Naive thymus-derived CD4-positive, alpha-beta T cell (primary cell): ENCODE measurements at regions of chr1 and their contacts with region 1.

Region 1: DNA sequence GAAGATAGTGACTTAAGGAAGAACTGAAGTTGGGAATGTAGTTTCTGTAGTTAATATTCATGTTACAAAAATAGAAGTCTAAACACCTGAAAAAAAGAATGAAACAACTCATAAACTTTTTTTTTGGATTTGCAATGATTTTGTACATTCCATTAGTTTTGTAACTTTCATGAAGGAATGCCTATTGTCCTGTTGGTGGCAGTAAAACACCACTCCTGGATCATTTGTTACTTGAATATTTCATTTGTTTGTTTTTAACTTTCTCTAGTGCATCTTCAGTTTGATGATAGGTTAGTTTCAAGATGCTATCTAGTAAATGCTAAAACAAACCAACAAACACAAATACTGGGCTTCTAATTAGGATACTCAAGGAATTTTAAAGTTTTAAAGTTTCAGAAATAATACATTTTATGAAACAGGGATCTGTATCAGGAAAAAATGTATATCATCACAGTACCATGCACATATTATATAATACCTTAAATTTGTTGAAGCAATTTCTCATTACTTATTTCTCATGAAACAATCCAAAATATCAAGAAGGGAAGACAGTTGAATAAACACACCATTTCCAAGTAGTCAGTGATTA is 229.7 kb upstream of the CACYBP start:
- DNase-seq: peak in 7 of 9 donors; percentile 19 to 58 (median 43)
- ATAC-seq: peak; percentile 68
- H3K4me3 ChIP-seq: no peak overlapping the region
- H3K4me3 Mint-ChIP-seq: no peak overlapping the region
- H3K27ac ChIP-seq: no peak overlapping the region
- H3K27ac Mint-ChIP-seq: peak overlapping the region in 1 of 9 donors; percentile 12
- H3K4me1 ChIP-seq: no peaks in the 10 kb centered on the region
- H3K4me1 Mint-ChIP-seq: peaks cover 0 to 18% (median 4%) of the 10 kb centered on the region in 7 donors
- H3K27me3 ChIP-seq: no peaks in the 10 kb centered on the region
- H3K27me3 Mint-ChIP-seq: no peaks in the 10 kb centered on the region

Region 2: DNA sequence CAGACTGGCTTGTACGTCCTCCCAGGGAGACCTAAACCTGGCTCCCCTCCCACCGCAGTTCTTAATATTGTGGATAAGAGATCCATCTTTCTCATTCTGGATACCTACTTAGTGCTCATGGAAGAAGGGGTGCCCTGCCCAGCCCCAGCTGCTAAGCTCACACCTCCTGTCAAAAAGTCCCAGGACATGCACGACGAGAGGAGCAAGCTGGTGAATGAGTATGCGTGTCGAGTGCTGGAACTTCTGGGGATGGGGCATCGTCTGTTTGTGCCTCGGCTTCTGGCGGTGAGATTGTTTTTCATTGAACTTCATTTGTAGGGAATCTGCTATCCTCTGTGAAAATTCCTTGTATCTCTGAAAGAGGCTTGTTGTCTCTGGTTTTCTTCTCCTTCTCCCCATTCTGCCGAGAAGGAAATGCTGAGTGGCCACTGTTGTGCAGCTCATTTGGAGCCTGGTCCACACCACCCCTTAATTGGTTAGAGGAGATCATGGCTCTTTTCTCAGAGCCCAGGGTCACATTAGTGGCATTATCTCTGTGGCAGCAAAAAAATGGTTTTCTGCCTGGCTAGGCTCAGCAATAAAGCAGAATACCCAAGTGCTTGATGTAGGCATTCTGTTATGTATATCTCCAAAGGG is 30.3 kb after region 1 on chr1:
- CTCF ChIA-PET with region 1: no interaction called
- POLR2A ChIA-PET with region 1: no interaction called
- intact Hi-C with region 1: loop called (anchors 1 to 2 kb)
- DNase-seq: peak in 4 of 9 donors; percentile 2 to 29 (median 16)
- ATAC-seq: peak; percentile 7
- H3K4me3 ChIP-seq: peak overlapping the region; percentile 73
- H3K4me3 Mint-ChIP-seq: no peak overlapping the region
- H3K27ac ChIP-seq: peak overlapping the region; percentile 81
- H3K27ac Mint-ChIP-seq: no peak overlapping the region
- H3K4me1 ChIP-seq: peaks cover 7 to 9% of the 10 kb centered on the region in 2 donors
- H3K4me1 Mint-ChIP-seq: peaks cover 0 to 18% (median 6%) of the 10 kb centered on the region in 7 donors
- H3K27me3 ChIP-seq: no peaks in the 10 kb centered on the region
- H3K27me3 Mint-ChIP-seq: no peaks in the 10 kb centered on the region

Region 3: DNA sequence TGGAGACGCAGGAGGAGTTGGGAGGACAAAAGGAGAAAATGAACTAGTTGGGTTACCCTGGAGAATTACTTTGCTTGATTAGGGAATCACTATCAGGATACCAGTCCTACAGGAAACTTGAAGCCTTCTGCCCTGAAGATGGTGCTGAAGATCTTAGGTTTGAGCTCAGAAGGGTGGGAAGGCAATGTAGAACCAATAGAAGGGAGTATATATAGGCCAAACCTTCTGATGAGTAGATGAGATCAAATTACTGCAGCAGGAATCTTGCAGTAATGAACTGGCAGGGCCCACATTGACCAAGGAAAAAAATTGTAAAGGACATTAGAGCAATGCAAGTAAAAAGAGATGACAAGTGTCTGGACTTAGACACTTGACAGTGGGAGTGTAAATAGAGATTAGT is 113.4 kb after region 1 on chr1:
- CTCF ChIA-PET with region 1: interaction called, 3 read pairs
- POLR2A ChIA-PET with region 1: no interaction called
- intact Hi-C with region 1: loop called in 1 of 2 experiments (anchors 10 kb)
- DNase-seq: peak in 3 of 9 donors; percentile 9 to 35 (median 27)
- ATAC-seq: peak; percentile 44
- H3K4me3 ChIP-seq: no peak overlapping the region
- H3K4me3 Mint-ChIP-seq: no peak overlapping the region
- H3K27ac ChIP-seq: no peak overlapping the region
- H3K27ac Mint-ChIP-seq: peak overlapping the region in 2 of 9 donors; percentile 22 to 46
- H3K4me1 ChIP-seq: no peaks in the 10 kb centered on the region
- H3K4me1 Mint-ChIP-seq: peaks cover 0 to 9% (median 4%) of the 10 kb centered on the region in 7 donors
- H3K27me3 ChIP-seq: no peaks in the 10 kb centered on the region
- H3K27me3 Mint-ChIP-seq: no peaks in the 10 kb centered on the region

Region 4: DNA sequence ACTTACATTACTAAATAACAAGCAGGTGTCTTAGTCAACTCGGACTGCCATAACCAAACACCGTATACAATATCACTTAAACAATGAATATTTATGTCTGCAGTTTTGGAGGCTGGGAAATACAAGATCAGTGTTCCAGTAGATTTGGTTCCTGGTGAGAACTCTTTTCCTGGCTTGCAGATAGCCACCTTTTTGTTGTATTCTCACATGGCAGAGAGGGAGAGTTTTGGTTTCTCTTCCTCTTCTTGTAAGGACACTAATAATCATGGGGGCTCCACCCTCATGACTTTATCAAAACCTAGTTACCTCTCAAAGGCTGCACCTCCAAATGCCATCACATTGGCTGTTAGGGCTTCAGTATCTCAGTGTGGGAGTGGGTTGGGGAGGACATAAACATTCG is 146.8 kb after region 1 on chr1:
- CTCF ChIA-PET with region 1: no interaction called
- POLR2A ChIA-PET with region 1: no interaction called
- intact Hi-C with region 1: no loop called
- DNase-seq: no peak
- ATAC-seq: no peak
- H3K4me3 ChIP-seq: no peak overlapping the region
- H3K4me3 Mint-ChIP-seq: peak overlapping the region in 3 of 10 donors; percentile 27 to 52 (median 28)
- H3K27ac ChIP-seq: no peak overlapping the region
- H3K27ac Mint-ChIP-seq: peak overlapping the region in 1 of 9 donors; percentile 54
- H3K4me1 ChIP-seq: no peaks in the 10 kb centered on the region
- H3K4me1 Mint-ChIP-seq: peaks cover 0 to 25% (median 13%) of the 10 kb centered on the region in 7 donors
- H3K27me3 ChIP-seq: no peaks in the 10 kb centered on the region
- H3K27me3 Mint-ChIP-seq: no peaks in the 10 kb centered on the region

Region 5: DNA sequence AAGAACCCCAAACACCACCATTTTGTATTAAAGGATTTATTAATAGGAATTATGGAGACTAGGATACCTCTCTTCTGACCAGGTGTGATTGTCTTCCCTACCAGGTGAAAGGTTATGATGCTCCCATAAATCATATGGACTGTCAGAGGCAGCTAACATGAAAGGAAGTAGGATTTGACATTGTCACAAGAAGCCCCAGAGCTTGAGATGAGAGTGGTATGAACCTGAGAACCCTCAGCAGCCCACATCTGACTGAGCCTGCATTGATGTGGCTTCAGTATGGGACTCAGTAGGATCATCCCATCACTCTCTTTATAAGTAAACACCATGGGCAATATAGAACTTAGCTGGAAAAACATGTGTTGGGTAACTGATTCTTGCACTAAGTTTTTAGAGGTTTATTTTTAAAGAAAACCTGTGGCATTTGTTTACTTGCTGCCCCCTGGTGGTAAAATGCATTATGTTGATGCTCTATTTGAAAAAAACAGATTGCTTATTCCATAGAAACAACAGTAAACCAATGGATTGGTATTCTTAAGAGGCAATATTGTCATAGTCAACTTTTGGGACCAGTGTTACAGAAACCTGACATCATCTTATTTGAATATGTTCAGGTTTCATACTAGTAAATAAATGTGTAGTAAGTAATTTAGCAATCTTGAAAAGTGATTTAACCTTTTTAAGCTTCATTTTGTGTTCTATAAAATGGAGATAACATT is 213.1 kb after region 1 on chr1:
- CTCF ChIA-PET with region 1: interaction called, 3 read pairs
- POLR2A ChIA-PET with region 1: interaction called, 4 read pairs
- intact Hi-C with region 1: loop called (anchors 1 kb)
- DNase-seq: peak in 7 of 9 donors; percentile 50 to 69 (median 58)
- ATAC-seq: peak; percentile 41
- H3K4me3 ChIP-seq: no peak overlapping the region
- H3K4me3 Mint-ChIP-seq: no peak overlapping the region
- H3K27ac ChIP-seq: no peak overlapping the region
- H3K27ac Mint-ChIP-seq: peak overlapping the region in 7 of 9 donors; percentile 19 to 91 (median 48)
- H3K4me1 ChIP-seq: peaks cover 0 to 9% of the 10 kb centered on the region in 2 donors
- H3K4me1 Mint-ChIP-seq: peaks cover 9 to 54% (median 40%) of the 10 kb centered on the region in 7 donors
- H3K27me3 ChIP-seq: no peaks in the 10 kb centered on the region
- H3K27me3 Mint-ChIP-seq: no peaks in the 10 kb centered on the region

Region 6: GRCh38 chr1:175062858-175063257 is 292.8 kb after region 1 on chr1:
- CTCF ChIA-PET with region 1: no interaction called
- POLR2A ChIA-PET with region 1: no interaction called
- intact Hi-C with region 1: no loop called
- DNase-seq: no peak
- ATAC-seq: no peak
- H3K4me3 ChIP-seq: no peak overlapping the region
- H3K4me3 Mint-ChIP-seq: no peak overlapping the region
- H3K27ac ChIP-seq: no peak overlapping the region
- H3K27ac Mint-ChIP-seq: no peak overlapping the region
- H3K4me1 ChIP-seq: no peaks in the 10 kb centered on the region
- H3K4me1 Mint-ChIP-seq: no peaks in the 10 kb centered on the region
- H3K27me3 ChIP-seq: no peaks in the 10 kb centered on the region
- H3K27me3 Mint-ChIP-seq: peaks cover 0 to 28% (median 13%) of the 10 kb centered on the region in 5 donors

Region 7: GRCh38 chr1:175129182-175129581 is 359.1 kb after region 1 on chr1:
- CTCF ChIA-PET with region 1: interaction called, 4 read pairs
- POLR2A ChIA-PET with region 1: no interaction called
- intact Hi-C with region 1: loop called (anchors 1 to 2 kb)
- DNase-seq: no peak
- ATAC-seq: no peak
- H3K4me3 ChIP-seq: no peak overlapping the region
- H3K4me3 Mint-ChIP-seq: no peak overlapping the region
- H3K27ac ChIP-seq: no peak overlapping the region
- H3K27ac Mint-ChIP-seq: no peak overlapping the region
- H3K4me1 ChIP-seq: no peaks in the 10 kb centered on the region
- H3K4me1 Mint-ChIP-seq: peaks cover 0 to 3% (median 0%) of the 10 kb centered on the region in 7 donors
- H3K27me3 ChIP-seq: no peaks in the 10 kb centered on the region
- H3K27me3 Mint-ChIP-seq: peaks cover 0 to 5% (median under 1%) of the 10 kb centered on the region in 5 donors

Region 8: DNA sequence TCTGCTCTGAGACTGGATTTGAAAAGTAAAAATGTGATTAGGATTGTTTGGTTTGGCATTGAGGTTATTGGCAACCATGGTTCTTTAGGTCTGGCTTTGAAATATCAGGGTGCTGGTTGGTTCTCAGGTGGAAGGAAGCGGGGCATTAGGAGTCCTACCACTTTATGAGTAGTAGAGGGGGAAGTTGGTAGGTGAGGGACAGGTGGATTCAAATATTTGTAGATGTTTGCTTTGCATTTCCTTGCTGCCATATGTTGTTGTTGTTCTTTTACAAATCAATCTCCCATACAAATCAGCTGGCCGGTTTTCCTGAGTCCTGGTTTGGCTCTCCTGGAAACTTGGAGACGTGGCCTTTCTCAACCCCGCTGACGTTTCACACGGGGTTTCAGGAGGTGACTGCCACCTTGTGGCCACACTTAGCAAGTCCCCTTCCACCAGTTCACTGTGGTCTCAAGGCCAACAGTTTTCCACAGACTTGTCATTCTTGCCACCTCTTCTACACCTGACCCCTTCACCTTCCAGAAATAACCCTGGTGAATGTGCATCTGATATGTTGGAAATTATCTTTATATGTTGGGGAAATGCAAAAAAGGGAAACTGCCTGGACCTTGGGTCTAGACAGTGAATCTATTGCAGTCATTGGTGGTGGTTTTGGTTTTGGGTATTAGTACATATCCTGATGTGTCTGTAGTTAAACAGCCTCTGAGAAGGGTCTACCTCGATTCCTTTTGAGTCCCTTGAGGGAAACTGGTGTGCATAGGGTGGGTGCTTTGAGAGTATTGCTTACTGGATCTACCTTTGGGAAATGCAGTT is 549.6 kb after region 1 on chr1:
- CTCF ChIA-PET with region 1: no interaction called
- POLR2A ChIA-PET with region 1: no interaction called
- intact Hi-C with region 1: loop called in 1 of 2 experiments (anchors 10 kb)
- DNase-seq: peak; percentile 45 to 71 (median 62)
- ATAC-seq: peak; percentile 91
- H3K4me3 ChIP-seq: no peak overlapping the region
- H3K4me3 Mint-ChIP-seq: peak overlapping the region in 5 of 10 donors; percentile 8 to 44 (median 42)
- H3K27ac ChIP-seq: no peak overlapping the region
- H3K27ac Mint-ChIP-seq: no peak overlapping the region
- H3K4me1 ChIP-seq: peaks cover 4 to 5% of the 10 kb centered on the region in 2 donors
- H3K4me1 Mint-ChIP-seq: peaks cover 4 to 29% (median 18%) of the 10 kb centered on the region in 7 donors
- H3K27me3 ChIP-seq: no peaks in the 10 kb centered on the region
- H3K27me3 Mint-ChIP-seq: peaks cover 0 to 29% (median 5%) of the 10 kb centered on the region in 5 donors